ENCODE measurements at regions of chr16 and their contacts with region 1.

Region 1: GRCh38 chr16:58336332-58337089 is 41.7 kb upstream of the PRSS54 start:
- DNase-seq: peak; percentile 80 to 93
- ATAC-seq: peak; percentile 87
- H3K4me3 ChIP-seq: peak overlapping the region in 1 of 2 donors; percentile 20
- H3K27ac ChIP-seq: no peak overlapping the region
- H3K4me1 ChIP-seq: no peaks in the 10 kb centered on the region
- H3K27me3 ChIP-seq: peaks cover 0 to 2% of the 10 kb centered on the region in 2 donors

Region 2: DNA sequence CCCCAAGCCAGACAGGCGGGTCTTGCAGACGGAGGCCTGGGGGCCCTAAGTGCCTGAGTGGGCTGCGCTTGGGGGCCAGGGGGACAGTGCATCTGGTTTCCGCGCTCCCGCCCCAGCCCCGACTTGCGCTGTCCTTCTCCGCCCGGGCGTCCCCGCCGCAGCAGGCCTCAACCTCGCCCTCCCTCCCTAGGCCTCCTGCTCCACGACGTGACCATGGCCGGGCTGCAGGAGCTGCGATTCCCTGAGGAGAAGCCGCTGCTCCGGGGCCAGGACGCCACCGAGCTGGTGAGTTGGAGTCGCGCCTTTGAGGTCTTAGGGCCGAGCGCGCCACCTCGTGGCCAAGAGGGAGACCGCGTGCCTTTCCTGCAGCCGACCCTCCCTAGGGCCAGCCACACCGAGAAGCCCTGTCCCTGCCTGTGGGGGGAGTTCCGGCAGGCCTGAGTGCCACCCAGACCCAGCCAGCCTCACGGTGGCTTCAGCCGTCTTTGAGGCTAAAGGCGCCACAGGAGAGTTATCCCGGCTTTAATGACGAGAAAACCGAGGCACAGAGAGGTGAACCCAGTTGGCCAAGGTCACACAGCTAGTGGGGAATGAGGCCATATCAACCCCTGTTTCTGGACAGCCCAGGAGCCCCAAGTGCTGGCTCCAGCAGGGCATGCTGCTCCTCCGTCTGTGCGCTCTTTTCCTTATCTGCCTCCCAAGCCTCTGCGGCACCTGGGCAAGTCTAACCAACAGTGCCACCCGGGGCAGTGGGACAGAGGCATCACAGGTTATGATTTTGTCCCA is 151.2 kb after region 1 on chr16:
- intact Hi-C with region 1: loop called (anchors 2 kb)
- DNase-seq: peak; percentile 83 to 92
- ATAC-seq: peak; percentile 89
- H3K4me3 ChIP-seq: no peak overlapping the region
- H3K27ac ChIP-seq: no peak overlapping the region
- H3K4me1 ChIP-seq: no peaks in the 10 kb centered on the region
- H3K27me3 ChIP-seq: no peaks in the 10 kb centered on the region

Region 3: DNA sequence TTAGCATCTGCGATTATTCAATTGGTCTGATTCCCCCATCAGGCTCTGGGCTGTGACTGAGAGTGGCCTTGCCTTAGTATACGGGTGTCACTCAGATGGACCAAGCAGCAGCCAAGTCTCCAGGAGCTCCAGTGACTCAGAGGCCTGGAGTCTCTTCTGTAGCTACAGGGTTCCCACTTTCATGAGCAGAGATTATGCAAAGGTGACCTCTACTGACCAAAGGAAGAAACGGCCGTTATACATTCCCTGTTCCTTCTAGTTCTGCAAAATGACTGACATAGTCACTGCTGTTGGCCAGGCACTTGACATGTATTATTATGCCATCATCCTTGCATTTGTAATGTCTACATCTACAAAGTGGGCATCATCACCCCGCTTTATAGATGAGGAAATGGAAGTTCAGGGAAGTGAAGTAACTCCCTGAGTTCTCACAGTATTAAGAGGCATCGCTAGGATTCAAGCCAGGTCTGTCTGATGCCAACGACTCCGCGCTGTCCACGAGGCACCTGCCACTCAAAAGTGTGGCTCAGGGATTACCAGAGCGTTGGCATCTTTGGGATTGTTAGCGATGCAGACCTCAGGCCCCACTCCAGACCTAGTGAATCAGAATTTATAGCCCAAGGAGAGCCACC is 324.8 kb after region 1 on chr16:
- intact Hi-C with region 1: loop called (anchors 5 kb)
- DNase-seq: peak; percentile 66 to 77
- ATAC-seq: peak; percentile 78
- H3K4me3 ChIP-seq: no peak overlapping the region
- H3K27ac ChIP-seq: no peak overlapping the region
- H3K4me1 ChIP-seq: no peaks in the 10 kb centered on the region
- H3K27me3 ChIP-seq: no peaks in the 10 kb centered on the region

Region 4: GRCh38 chr16:58755989-58756649 is 419.6 kb after region 1 on chr16:
- intact Hi-C with region 1: loop called in 1 of 2 experiments (anchors 10 kb)
- DNase-seq: peak; percentile 76 to 86
- ATAC-seq: peak; percentile 84
- H3K4me3 ChIP-seq: no peak overlapping the region
- H3K27ac ChIP-seq: no peak overlapping the region
- H3K4me1 ChIP-seq: no peaks in the 10 kb centered on the region
- H3K27me3 ChIP-seq: no peaks in the 10 kb centered on the region

Measured in aorta (tissue), 5 donors.